ENCODE measurements at regions of chr4 and their contacts with region 1.

Region 1: DNA sequence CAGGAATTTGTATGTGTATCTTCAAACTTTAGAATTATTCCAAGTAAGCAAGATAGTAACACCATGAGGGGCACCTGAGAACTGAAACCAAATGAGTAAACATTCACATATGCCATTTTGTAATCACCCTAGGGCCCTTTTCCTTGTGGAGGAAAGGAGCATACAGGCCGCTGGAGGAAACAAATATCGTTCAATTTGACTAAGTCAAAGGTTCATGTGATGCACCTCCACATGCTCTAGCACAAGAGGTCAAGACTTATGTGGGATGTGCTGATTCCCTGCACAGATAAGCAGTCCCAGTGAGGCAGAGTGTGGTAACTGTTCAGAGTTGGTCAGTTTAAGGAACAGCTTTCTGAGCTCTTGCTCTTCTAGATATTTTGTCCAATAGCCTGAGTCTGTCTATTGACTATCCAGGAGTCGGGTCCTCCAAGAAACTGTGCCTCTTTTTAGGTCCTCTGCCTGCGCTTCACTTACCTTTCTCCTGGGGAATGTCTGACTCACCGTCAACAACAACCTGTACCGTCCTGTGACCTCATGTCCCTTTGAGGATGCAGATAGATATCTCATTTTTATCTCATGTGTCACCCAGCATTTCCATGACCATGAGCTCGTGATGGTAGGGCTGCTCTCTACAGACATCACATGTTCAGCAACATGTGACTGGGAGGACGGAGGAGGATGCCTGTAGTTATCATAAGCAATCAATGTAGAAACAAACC is 196.9 kb downstream of the NWD2 start:
- DNase-seq: peak; percentile 16
- H3K4me3 Mint-ChIP-seq: no peak overlapping the region
- H3K27ac Mint-ChIP-seq: no peak overlapping the region
- H3K4me1 Mint-ChIP-seq: no peaks in the 10 kb centered on the region
- H3K27me3 Mint-ChIP-seq: no peaks in the 10 kb centered on the region
- CTCF ChIP-seq: no peak

Region 2: DNA sequence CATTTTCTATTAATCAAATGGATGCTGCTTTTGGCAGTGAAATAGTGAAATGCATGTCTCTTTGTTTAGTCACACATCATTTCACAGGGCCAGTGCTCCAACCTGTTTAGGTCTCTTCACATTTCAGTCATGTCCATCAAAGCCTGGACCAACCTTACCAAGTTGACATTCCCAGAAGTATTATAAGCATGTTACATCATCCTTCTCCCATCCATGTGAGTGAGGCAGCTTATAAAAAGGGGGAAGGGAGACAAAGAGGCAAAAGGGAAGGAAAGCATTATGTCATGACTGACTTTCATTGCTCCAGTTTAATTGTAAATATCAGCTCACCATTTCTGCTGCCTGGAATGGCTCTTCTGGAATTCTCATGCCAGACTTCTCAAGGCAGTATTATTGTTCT is 102.5 kb before region 1 on chr4:
- CTCF ChIA-PET with region 1: no interaction called
- POLR2A ChIA-PET with region 1: no interaction called
- intact Hi-C with region 1: no loop called
- DNase-seq: no peak
- H3K4me3 Mint-ChIP-seq: no peak overlapping the region
- H3K27ac Mint-ChIP-seq: no peak overlapping the region
- H3K4me1 Mint-ChIP-seq: peaks cover 6% of the 10 kb centered on the region
- H3K27me3 Mint-ChIP-seq: no peaks in the 10 kb centered on the region
- CTCF ChIP-seq: no peak

Region 3: GRCh38 chr4:37568481-37568880 is 127.0 kb after region 1 on chr4:
- CTCF ChIA-PET with region 1: interaction called, 19 read pairs
- POLR2A ChIA-PET with region 1: no interaction called
- intact Hi-C with region 1: no loop called
- DNase-seq: no peak
- H3K4me3 Mint-ChIP-seq: no peak overlapping the region
- H3K27ac Mint-ChIP-seq: no peak overlapping the region
- H3K4me1 Mint-ChIP-seq: peaks cover 4% of the 10 kb centered on the region
- H3K27me3 Mint-ChIP-seq: no peaks in the 10 kb centered on the region
- CTCF ChIP-seq: no peak

Measured in MCF 10A (cell line).